GM18951 (cell line): ENCODE measurements at regions of chr2 and their contacts with region 1.

Region 1: GRCh38 chr2:174682578-174683391 is 81.5 kb downstream of the CHRNA1 start:
- POLR2A ChIP-seq: peak; percentile 51

Region 2: DNA sequence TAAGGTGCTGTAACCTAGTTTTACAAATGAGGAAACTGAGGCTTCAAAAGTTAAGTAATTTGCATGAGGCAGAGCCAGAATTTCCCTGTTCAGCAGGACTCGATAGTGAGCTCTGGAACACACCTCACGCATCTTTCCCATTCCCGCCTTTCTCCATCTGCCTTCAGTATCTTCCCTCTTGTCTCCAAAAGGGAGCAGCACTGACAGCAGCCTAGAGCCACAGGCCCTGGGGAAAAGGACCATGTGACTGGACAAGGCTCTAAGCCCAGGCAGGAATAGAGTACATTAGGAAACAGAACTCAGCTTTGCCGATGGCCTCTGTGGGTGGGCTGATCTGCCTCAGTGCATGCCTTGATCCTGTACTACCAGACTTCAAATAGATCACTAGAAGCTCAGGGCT is 217.5 kb before region 1 on chr2:
- in situ Hi-C with region 1: loop called (anchors 10 kb)
- POLR2A ChIP-seq: no peak

Region 3: GRCh38 chr2:174603280-174603679 is 79.5 kb before region 1 on chr2:
- in situ Hi-C with region 1: loop called (anchors 10 kb)
- POLR2A ChIP-seq: no peak

Region 4: DNA sequence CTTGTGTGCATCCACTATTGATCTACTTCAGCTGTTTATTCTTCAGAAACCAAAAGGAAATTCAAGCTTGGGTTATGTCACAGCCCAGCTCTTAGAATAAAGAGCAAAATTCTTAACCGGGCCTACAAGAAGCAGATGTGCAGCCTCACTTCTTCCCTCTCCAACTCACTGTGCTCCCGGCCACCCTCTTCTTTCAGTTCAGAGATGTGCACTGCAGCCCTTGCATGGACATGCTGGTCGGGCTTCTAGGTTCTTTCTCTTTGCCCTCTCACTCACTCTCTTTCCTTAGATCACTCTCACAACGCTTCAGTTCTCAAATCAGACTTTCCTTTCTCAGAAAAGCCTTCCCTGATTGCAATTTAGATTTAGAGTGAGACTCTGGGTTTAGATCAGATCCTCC is 218.3 kb after region 1 on chr2:
- in situ Hi-C with region 1: no loop called
- POLR2A ChIP-seq: no peak

Region 5: DNA sequence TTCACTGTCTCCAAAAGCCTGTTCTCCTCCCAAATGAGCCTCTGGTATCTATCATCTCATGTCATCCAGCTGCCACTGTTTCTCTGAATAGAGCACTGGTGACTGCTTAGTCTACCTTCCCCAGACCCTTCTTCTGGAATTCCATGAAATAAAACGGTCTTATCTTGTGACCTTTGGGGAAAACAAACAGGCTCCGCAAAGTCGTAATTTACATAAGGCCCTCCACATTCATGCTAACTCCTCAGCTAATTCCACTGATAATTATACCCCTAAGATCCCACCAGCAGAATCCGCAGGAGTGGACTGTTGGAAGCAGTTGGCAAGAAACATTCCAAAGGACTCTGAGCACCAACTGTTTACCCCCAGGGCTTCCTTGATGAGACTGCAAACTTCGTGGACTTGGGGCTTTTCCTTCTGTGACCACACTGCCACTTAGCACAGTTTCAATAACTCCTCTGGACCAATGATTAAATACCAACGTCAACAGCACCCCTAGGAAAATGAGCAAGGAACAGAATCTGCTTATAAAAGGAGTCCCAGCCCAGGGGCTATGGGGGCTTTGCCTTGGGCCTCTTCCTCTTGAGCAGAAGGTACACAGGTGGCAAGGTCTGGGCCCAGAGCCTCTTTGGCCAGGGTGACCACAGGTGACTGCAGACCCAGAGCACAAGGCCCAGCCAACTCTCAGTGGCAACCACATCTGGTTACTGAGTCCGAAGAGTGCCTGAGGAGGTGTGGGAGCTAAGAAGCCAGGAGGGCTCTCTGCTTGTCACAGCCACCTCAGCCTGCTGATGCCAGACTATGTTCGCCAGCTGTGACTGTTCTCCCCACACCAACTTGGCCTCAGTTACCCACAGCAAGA is 356.5 kb after region 1 on chr2:
- in situ Hi-C with region 1: no loop called
- POLR2A ChIP-seq: no peak